HCT116 (cell line): ENCODE measurements at regions of chr7 and their contacts with region 1.

Region 1: DNA sequence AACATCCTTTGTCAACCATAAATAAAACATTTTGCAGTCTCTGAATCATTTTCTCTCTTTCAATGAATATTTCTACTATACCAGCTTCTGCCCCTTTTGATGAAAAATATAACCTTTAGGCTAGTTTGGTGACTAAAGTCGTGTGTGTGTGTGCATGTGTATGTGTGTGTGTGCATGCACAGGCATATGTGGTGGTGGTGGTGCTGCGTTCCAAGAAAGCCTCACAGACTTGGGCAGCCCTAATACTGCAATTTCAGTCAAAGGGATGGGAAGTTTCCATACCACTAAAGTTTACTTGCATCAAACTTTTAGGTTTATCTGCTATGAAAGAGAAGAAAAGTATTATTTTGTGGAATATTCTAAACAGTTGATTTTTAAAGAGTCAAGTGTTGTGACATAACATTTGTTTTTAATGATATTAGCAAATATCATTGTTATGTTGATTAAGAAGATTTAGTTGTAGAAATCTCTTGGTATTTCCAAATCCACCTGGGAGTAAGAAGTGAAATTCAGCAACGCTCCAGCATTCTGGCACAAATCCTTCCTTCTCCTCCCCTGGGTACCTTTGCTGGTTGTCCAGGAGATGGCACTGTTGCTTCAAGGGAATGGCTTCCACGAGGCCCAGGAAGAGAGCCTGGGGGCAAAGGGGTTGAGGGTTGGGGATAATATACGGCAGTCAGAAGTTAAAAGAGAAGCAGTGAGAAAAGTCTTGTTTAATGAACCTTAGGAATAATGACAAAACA is 41.5 kb downstream of the ASB4 start:
- DNase-seq: peak; percentile 50
- ATAC-seq: peak; percentile 95
- H3K4me3 ChIP-seq: no peak overlapping the region
- H3K27ac ChIP-seq: no peak overlapping the region
- H3K4me1 ChIP-seq: no peaks in the 10 kb centered on the region; a peak in 1 of 4 replicates
- H3K27me3 ChIP-seq: no peaks in the 10 kb centered on the region
- CTCF ChIP-seq: peak; percentile 90 to 95 (median 94)
- POLR2A ChIP-seq: no peak
- RAD21 ChIP-seq: peak; percentile 97

Region 2: GRCh38 chr7:95684037-95684436 is 156.8 kb after region 1 on chr7:
- CTCF ChIA-PET with region 1: interaction called, 226 read pairs
- POLR2A ChIA-PET with region 1: interaction called, 5 read pairs
- RAD21 ChIA-PET with region 1: interaction called, 3 to 9 read pairs
- intact Hi-C with region 1: loop called (anchors 1 kb)
- DNase-seq: peak; percentile 44
- ATAC-seq: peak; percentile 74
- H3K4me3 ChIP-seq: no peak overlapping the region
- H3K27ac ChIP-seq: no peak overlapping the region
- H3K4me1 ChIP-seq: peaks cover 0 to 5% of the 10 kb centered on the region in 2 experiments; a peak in 1 of 4 replicates
- H3K27me3 ChIP-seq: no peaks in the 10 kb centered on the region
- CTCF ChIP-seq: peak; percentile 50 to 82 (median 57); a peak in 5 of 6 replicates
- POLR2A ChIP-seq: no peak
- RAD21 ChIP-seq: peak; percentile 86

Region 3: DNA sequence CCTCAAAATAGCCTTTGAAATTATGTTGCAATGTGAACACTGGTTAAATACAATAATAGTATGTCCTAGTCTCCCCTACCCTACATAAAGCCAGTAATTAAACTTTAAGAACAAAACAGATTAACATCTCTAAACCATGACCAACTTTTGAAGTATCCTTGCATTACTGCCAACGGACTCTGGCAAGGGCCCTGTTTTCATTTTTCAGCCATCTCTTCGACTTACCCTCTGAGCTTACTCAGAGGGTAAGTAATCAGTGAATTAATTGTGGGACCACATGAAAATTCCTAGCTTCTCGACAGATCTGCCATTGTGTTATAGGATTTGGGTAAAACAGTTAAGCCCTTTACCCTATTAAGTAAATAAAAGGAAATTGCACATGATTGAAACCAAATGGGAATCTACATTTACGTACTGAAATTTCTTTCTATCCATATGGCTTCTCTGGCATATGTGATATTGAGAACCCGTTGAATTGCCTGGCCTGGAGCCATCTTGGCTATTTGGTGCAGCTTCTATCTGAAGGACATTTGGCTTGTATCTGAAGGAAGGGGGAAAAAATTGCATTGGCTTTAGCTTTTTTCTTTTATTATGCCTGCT is 284.7 kb after region 1 on chr7:
- CTCF ChIA-PET with region 1: no interaction called
- POLR2A ChIA-PET with region 1: no interaction called
- RAD21 ChIA-PET with region 1: no interaction called
- intact Hi-C with region 1: no loop called
- DNase-seq: no peak
- ATAC-seq: no peak
- H3K4me3 ChIP-seq: no peak overlapping the region
- H3K27ac ChIP-seq: no peak overlapping the region
- H3K4me1 ChIP-seq: no peaks in the 10 kb centered on the region
- H3K27me3 ChIP-seq: peaks cover 38% of the 10 kb centered on the region; the same call in 1 of the 2 replicates
- CTCF ChIP-seq: no peak
- POLR2A ChIP-seq: no peak
- RAD21 ChIP-seq: no peak